Activated CD8-positive, alpha-beta memory T cell treated with anti-CD3 and anti-CD28 coated beads, Interleukin-2, amount 10 ng/mL, durations not matched to agents 7 days and 5 days (primary cell): ENCODE measurements at regions of chr12 and their contacts with region 1.

Region 1: GRCh38 chr12:48851883-48852733 is at the start of gene DDX23:
- DNase-seq: peak; percentile 97
- ATAC-seq: peak; percentile 94
- H3K4me3 Mint-ChIP-seq: peak within 1 kb of the TSS; percentile 96
- H3K27ac Mint-ChIP-seq: peak within 1 kb of the TSS; percentile 97
- H3K4me1 Mint-ChIP-seq: peaks cover 33% of the 10 kb centered on the region
- H3K27me3 Mint-ChIP-seq: no peaks in the 10 kb centered on the region
- total RNA-seq, gene DDX23: 146 to 157 TPM

Region 2: DNA sequence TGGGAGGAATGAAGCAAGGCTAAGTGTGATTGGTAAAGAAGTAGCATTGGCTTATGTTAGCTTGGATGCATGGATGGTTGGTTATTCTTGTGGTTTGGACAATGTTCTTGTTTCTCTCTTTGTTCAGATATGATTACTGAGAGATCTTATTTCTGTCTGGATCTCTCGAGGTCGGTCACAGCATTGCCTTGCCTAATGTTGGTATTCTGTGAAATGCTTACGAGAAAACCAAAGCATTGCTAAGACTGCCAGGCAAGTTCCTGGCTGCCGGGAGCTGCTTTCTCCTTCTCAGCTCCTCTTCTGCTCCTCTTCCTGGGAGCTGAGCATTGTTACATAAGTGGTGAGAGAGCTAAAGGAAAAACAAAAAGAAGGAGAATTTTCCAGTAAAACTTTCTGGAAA is 21.0 kb after region 1 on chr12:
- CTCF ChIA-PET with region 1: interaction called, 86 read pairs
- DNase-seq: no peak
- ATAC-seq: no peak
- H3K4me3 Mint-ChIP-seq: no peak overlapping the region
- H3K27ac Mint-ChIP-seq: no peak overlapping the region
- H3K4me1 Mint-ChIP-seq: no peaks in the 10 kb centered on the region
- H3K27me3 Mint-ChIP-seq: peaks cover 6% of the 10 kb centered on the region

Region 3: DNA sequence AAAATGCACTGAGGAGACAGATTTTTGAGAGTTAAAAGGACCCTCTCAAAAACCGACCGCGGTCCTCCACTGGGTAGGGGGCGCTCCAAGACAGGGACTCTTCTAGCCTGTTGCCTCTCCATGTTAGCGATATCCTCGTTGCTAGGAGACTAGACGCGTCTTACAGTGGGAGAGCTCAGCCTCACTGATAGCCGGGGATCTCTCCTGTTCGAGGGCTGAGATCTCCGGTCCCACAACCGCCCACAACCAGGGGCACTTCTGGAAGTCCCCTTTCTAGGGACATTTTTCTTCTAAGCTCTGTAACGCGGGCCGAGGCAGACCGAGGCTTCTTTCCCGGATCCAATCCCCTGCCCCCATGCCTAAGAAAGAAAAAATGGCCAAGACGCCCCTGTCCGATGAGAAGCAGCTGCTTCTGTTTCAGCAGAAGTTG is 51.9 kb after region 1 on chr12:
- CTCF ChIA-PET with region 1: interaction called, 62 read pairs
- DNase-seq: peak; percentile 88
- ATAC-seq: peak; percentile 91
- H3K4me3 Mint-ChIP-seq: peak overlapping the region; percentile 38
- H3K27ac Mint-ChIP-seq: peak overlapping the region; percentile 68
- H3K4me1 Mint-ChIP-seq: peaks cover 19% of the 10 kb centered on the region
- H3K27me3 Mint-ChIP-seq: peaks cover 9% of the 10 kb centered on the region

Region 4: GRCh38 chr12:48957141-48958048 is 105.3 kb after region 1 on chr12 and contains the start of gene ARF3:
- CTCF ChIA-PET with region 1: interaction called, 30 read pairs
- DNase-seq: peak; percentile 95
- ATAC-seq: peak; percentile 97
- H3K4me3 Mint-ChIP-seq: peak within 1 kb of the TSS; percentile 94
- H3K27ac Mint-ChIP-seq: peak within 1 kb of the TSS; percentile 82
- H3K4me1 Mint-ChIP-seq: peaks cover 26% of the 10 kb centered on the region
- H3K27me3 Mint-ChIP-seq: peaks cover 20% of the 10 kb centered on the region
- total RNA-seq, gene ARF3: 89.4 to 118 TPM

Region 5: DNA sequence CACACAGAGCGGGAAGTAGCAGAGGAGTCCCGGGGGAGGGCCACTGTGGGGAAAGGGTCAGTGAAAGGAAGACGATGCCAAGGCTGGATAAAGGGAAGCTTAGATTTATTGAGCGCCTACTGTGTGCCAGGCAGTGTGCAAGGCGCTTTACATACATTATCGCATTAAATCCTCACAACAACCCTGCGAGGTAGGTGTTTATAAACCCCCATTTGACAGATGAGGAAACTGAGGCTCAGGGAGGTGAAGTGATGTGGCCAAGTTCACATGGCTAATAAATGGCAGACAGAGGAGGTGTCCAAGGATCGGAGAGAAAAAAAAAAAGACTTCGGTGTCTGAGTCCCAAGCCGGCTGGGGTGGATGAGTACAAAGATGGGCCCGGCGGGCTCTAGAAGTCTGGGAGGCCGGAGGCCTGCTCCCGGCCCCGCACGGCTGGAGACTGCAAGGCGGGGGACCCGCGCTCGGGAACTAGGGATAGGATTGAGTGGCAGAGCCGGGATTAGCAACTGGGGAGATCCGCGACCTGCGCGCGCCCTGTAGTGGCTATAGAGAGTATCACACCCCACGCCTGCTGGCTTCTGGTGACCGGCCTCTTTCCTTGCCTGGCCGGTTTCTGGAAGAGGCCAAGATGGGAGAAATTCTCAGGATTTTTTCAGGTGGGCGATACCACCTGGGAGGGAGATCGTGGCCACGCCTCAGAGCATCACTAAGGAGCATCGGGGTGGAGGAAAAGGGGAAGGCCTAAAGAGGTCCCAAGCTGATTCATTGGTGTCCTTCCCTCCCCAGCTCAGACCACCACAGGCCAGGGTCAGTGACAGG is 143.2 kb after region 1 on chr12:
- CTCF ChIA-PET with region 1: interaction called, 25 read pairs
- DNase-seq: peak; percentile 65
- ATAC-seq: peak; percentile 44
- H3K4me3 Mint-ChIP-seq: no peak overlapping the region
- H3K27ac Mint-ChIP-seq: no peak overlapping the region
- H3K4me1 Mint-ChIP-seq: peaks cover 33% of the 10 kb centered on the region
- H3K27me3 Mint-ChIP-seq: peaks cover 60% of the 10 kb centered on the region